ENCODE measurements at regions of chr7 and their contacts with region 1.

Region 1: GRCh38 chr7:140924019-140924820 is 509 bp downstream of the BRAF start:
- DNase-seq: peak; percentile 76 to 82
- ATAC-seq: peak; percentile 76 to 89 (median 80)
- H3K4me3 ChIP-seq: peak overlapping the region; percentile 81 to 99 (median 96)
- H3K27ac ChIP-seq: peak overlapping the region; percentile 96 to 100 (median 99)
- H3K4me1 ChIP-seq: peaks cover 5 to 45% (median 39%) of the 10 kb centered on the region in 9 donors
- H3K27me3 ChIP-seq: no peaks in the 10 kb centered on the region
- CTCF ChIP-seq: peak in 6 of 9 donors; percentile 37 to 71 (median 57)

Region 2: GRCh38 chr7:140696680-140697446 is 227.4 kb before region 1 on chr7 and contains the start of gene NDUFB2:
- intact Hi-C with region 1: loop called in 2 of 10 experiments (anchors 5 to 10 kb)
- DNase-seq: peak; percentile 50 to 53
- ATAC-seq: peak; percentile 91 to 97 (median 94)
- H3K4me3 ChIP-seq: peak within 1 kb of the TSS; percentile 48 to 96 (median 79)
- H3K27ac ChIP-seq: peak within 1 kb of the TSS; percentile 81 to 99 (median 95)
- H3K4me1 ChIP-seq: peaks cover 5 to 31% (median 27%) of the 10 kb centered on the region in 9 donors
- H3K27me3 ChIP-seq: no peaks in the 10 kb centered on the region
- CTCF ChIP-seq: no peak
- total RNA-seq, gene NDUFB2: 526 to 798 (median 653) TPM